ENCODE measurements at regions of chr5 and their contacts with region 1.

Region 1: DNA sequence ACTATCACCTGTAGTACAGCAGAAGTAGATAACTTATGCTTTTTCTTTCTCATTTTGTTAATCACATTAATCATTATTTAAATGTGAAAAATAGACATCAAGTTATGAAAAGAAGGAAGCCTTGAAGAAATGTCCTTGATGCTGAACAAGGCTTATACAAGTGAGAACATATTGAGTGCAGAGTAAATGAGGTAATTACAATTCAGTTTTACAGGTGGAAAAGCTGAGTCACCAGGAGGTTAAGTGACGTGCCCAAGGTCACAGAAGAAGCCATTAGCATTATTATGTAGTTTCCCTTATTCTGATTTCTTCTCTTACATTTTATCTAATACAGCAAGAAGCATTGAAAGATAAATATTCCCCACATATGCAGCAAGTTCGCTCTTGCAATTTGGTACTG is 998.5 kb upstream of the CDH6 start:
- DNase-seq: no peak
- ATAC-seq: no peak

Region 2: GRCh38 chr5:29853711-29854211 is 341.3 kb before region 1 on chr5:
- intact Hi-C with region 1: loop called (anchors 5 kb)
- DNase-seq: no peak
- ATAC-seq: no peak

Region 3: GRCh38 chr5:30287890-30288289 is 92.9 kb after region 1 on chr5:
- intact Hi-C with region 1: no loop called
- DNase-seq: no peak
- ATAC-seq: no peak

Region 4: DNA sequence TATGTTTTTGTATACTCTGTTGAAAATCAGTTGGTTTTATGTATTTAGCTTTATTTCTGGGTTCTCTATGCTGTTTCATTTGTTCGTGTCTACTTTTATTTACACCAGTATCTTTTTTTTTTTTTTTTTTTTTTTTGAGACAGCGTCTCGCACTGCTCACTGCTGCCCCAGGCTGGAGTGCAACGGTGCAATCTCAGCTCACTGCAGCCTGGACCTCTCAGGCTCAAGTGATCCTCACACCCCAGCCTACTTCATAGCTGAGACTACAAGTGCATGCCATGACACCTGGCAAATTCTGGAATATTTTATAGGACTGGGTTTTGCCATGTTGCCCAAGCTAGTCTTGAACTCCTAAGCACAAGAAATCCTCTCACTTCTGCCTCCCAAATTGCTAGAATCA is 129.0 kb after region 1 on chr5:
- intact Hi-C with region 1: no loop called
- DNase-seq: no peak
- ATAC-seq: no peak